ENCODE measurements at regions of chrX and their contacts with region 1.

Region 1: DNA sequence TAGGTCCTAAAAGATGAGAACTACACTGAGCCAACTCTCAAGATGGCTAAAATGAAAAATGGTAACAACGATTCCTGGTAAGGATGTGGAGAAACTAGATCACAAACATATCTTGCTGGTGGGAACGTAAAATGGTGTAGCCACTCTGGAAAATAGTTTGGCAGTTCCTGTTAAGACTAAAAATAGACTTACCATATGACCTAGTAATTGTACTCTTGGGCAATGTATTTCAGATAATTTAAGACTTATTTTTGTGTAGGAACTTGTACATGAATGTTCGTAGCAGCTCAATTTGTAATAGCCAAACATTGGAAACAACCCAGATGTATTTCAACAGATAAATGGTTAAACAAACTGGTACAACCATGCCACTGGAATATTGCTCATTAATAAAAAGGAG is 106.2 kb downstream of the HDAC8 start:
- DNase-seq: no peak
- ATAC-seq: no peak
- H3K4me3 ChIP-seq: no peak overlapping the region
- H3K27ac ChIP-seq: no peak overlapping the region
- H3K4me1 ChIP-seq: no peaks in the 10 kb centered on the region
- H3K27me3 ChIP-seq: peaks cover 2% of the 10 kb centered on the region
- CTCF ChIP-seq: no peak
- POLR2A ChIP-seq: no peak
- RAD21 ChIP-seq: no peak

Region 2: DNA sequence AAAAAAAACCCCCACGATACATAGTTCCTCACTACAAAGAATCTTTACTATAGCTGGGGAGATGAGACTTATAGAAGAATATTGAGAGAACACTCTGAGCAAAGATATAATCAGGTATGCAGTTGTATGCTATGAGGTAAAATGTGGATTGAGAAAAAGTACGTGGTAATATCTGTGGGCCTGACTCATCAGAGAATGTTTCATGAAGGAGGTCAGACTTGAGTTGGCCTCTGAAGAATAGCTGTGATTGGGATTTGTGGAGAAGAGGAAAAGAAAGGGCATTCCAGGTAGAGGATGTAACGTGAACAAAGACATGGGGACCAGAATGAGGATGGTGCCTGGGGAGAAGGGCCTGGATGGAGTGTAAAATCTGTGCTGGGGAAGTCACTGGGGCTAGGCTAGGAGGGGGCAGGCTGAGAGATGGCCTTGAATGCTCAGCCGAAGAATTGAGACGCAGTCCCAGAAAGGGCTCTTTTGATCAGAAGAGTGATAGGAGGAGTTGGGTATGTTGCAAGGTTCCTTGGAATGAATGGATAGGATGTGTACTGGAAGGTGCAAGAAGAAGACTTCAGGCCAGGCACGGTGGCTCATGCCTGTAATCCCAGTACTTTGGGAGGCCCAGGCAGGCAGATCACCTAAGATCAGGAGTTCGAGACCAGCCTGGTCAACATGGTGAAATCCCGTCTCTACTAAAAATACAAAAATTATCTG is 1327.3 kb before region 1 on chrX:
- CTCF ChIA-PET with region 1: no interaction called
- POLR2A ChIA-PET with region 1: no interaction called
- dilution Hi-C with region 1: no loop called
- in situ Hi-C with region 1: no loop called
- intact Hi-C with region 1: no loop called
- DNase-seq: peak; percentile 40
- ATAC-seq: no peak
- H3K4me3 ChIP-seq: no peak overlapping the region
- H3K27ac ChIP-seq: no peak overlapping the region
- H3K4me1 ChIP-seq: no peaks in the 10 kb centered on the region
- H3K27me3 ChIP-seq: no peaks in the 10 kb centered on the region; the same call in 1 of the 2 replicates
- CTCF ChIP-seq: no peak
- POLR2A ChIP-seq: no peak
- RAD21 ChIP-seq: no peak

Region 3: DNA sequence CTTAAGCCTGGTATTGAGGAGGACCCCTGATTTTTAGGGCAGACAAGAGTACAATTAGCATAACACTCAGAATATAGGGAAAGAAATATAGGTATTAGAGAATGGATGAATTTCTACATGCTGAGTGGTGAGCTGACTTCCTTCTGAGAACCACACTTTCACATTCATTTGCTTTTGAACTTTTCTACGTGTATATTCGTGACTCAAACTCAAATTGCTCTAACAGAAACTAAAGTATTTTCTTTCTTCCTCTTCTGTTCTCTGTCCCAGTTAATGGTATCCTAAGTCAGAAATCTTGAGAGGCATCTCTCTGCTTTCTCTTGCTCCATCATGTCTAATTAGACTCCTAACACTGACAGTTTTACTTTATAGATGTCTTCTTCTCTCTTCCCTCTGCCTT is 57.6 kb before region 1 on chrX:
- CTCF ChIA-PET with region 1: no interaction called
- POLR2A ChIA-PET with region 1: no interaction called
- dilution Hi-C with region 1: no loop called
- in situ Hi-C with region 1: no loop called
- intact Hi-C with region 1: no loop called
- DNase-seq: no peak
- ATAC-seq: no peak
- H3K4me3 ChIP-seq: no peak overlapping the region
- H3K27ac ChIP-seq: no peak overlapping the region
- H3K4me1 ChIP-seq: no peaks in the 10 kb centered on the region
- H3K27me3 ChIP-seq: peaks cover 1% of the 10 kb centered on the region; the same call in 1 of the 2 replicates
- CTCF ChIP-seq: no peak
- POLR2A ChIP-seq: no peak
- RAD21 ChIP-seq: no peak

Region 4: DNA sequence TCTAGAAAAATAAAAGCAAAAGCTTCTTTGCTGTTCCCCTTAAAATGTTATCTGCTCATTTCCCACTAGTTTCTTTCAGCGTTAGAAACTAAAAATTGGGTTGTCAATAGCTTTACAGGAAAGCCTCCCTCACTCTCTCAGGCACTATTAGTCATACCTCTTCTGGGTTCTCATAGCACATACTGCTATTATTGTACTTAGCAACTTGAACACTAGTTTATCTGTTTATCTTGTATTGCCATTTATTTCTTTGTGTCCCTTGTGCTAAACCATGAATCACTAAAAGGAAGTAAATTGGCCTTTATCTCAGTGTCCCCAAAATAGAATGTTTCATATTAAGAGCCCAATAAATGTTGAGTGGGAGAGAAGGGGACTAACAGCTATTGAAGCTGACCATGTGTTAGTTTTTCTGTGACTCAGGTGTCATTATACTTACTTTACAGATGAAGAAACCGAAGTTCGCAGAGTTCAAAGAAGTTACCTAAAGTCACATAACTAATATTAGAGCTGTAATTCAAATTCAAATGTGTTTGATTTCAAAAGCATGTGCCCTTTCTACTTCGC is 36.0 kb before region 1 on chrX:
- CTCF ChIA-PET with region 1: no interaction called
- POLR2A ChIA-PET with region 1: no interaction called
- dilution Hi-C with region 1: loop called (anchors 5 kb)
- in situ Hi-C with region 1: no loop called
- intact Hi-C with region 1: no loop called
- DNase-seq: no peak
- ATAC-seq: no peak
- H3K4me3 ChIP-seq: no peak overlapping the region
- H3K27ac ChIP-seq: no peak overlapping the region
- H3K4me1 ChIP-seq: no peaks in the 10 kb centered on the region
- H3K27me3 ChIP-seq: peaks cover 7% of the 10 kb centered on the region
- CTCF ChIP-seq: no peak
- POLR2A ChIP-seq: no peak
- RAD21 ChIP-seq: no peak

Region 5: GRCh38 chrX:72652082-72652481 is 185.6 kb after region 1 on chrX:
- CTCF ChIA-PET with region 1: no interaction called
- POLR2A ChIA-PET with region 1: no interaction called
- dilution Hi-C with region 1: no loop called
- in situ Hi-C with region 1: no loop called
- intact Hi-C with region 1: no loop called
- DNase-seq: no peak
- ATAC-seq: no peak
- H3K4me3 ChIP-seq: no peak overlapping the region
- H3K27ac ChIP-seq: no peak overlapping the region
- H3K4me1 ChIP-seq: no peaks in the 10 kb centered on the region
- H3K27me3 ChIP-seq: no peaks in the 10 kb centered on the region; the same call in none of the 2 replicates
- CTCF ChIP-seq: no peak
- POLR2A ChIP-seq: no peak
- RAD21 ChIP-seq: no peak

Measured in IMR-90 (cell line).